ENCODE measurements at regions of chr1 and their contacts with region 1.

Region 1: GRCh38 chr1:81478219-81478618 is 322.5 kb upstream of the ADGRL2 start:
- DNase-seq: no peak
- H3K4me3 ChIP-seq: peak overlapping the region in 1 of 4 donors; percentile 20
- H3K27ac ChIP-seq: no peak overlapping the region
- H3K4me1 ChIP-seq: peaks cover 0 to 5% (median 0%) of the 10 kb centered on the region in 4 donors
- H3K27me3 ChIP-seq: no peaks in the 10 kb centered on the region
- CTCF ChIP-seq: no peak
- EP300 ChIP-seq: no peak
- POLR2A ChIP-seq: no peak

Region 2: DNA sequence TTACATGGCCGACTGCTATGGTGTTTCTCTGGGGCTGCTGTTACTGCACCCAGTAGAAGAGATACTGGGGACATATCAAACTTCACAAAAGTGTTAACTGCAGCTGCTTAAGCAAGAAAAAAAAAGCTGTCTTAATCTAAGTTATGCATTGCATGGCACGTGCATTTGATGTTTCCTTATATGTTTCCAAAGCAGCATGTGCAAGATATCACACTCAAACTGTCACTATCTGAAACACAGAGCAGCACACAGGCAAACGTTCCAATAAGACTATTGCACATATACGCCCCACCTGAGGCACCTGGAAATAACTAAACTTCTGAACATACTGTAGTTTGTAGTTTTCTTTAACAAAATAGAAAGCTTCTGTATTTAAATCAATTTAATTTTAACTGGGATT is 348.9 kb before region 1 on chr1:
- in situ Hi-C with region 1: no loop called
- intact Hi-C with region 1: no loop called
- DNase-seq: no peak
- H3K4me3 ChIP-seq: no peak overlapping the region
- H3K27ac ChIP-seq: no peak overlapping the region
- H3K4me1 ChIP-seq: no peaks in the 10 kb centered on the region
- H3K27me3 ChIP-seq: no peaks in the 10 kb centered on the region
- CTCF ChIP-seq: no peak
- EP300 ChIP-seq: no peak
- POLR2A ChIP-seq: no peak

Region 3: DNA sequence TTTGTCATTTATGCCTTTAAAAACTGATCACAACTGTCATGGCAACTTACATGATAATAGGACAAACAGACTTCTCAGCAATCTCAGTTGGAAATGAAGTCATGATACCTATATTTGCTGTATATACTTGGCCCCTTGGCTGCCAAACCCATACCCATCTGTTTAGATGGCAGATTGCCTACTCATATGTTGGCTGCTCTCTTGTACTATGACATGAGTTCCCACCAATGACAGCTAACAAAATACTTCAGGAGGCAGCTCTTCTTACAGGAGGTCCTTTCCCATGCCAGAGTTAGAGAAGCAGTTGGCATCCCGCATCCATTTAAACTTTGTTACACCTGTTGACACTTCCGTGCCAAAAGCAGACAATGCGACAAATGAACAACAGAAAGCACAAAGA is 280.6 kb before region 1 on chr1:
- in situ Hi-C with region 1: no loop called
- intact Hi-C with region 1: no loop called
- DNase-seq: no peak
- H3K4me3 ChIP-seq: no peak overlapping the region
- H3K27ac ChIP-seq: no peak overlapping the region
- H3K4me1 ChIP-seq: no peaks in the 10 kb centered on the region
- H3K27me3 ChIP-seq: no peaks in the 10 kb centered on the region
- CTCF ChIP-seq: no peak
- EP300 ChIP-seq: no peak
- POLR2A ChIP-seq: no peak

Region 4: DNA sequence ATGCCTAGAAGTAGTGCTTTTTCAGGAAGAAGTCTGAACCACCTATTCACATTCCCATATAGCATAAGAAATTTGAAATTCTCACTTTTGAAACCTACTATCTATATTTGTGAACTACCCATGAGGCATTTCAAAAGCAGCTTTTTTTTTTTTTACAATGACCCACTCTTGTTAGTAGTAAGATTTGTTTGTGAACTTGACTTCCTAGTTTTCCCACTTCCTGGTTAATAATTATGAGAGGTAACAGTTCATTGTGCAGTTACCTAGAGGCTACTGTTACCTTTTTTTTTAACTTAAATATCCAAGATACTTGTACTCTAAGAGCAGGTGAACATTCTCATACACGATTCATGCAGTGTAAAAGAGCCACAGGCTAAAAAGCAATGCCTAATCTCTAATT is 49.2 kb before region 1 on chr1:
- in situ Hi-C with region 1: no loop called
- intact Hi-C with region 1: loop called (anchors 2 kb)
- DNase-seq: no peak
- H3K4me3 ChIP-seq: no peak overlapping the region
- H3K27ac ChIP-seq: no peak overlapping the region
- H3K4me1 ChIP-seq: peaks cover 0 to 8% (median 3%) of the 10 kb centered on the region in 4 donors
- H3K27me3 ChIP-seq: no peaks in the 10 kb centered on the region
- CTCF ChIP-seq: no peak
- EP300 ChIP-seq: no peak
- POLR2A ChIP-seq: no peak

Measured in transverse colon (tissue), 4 donors.